ENCODE measurements at regions of chr16 and their contacts with region 1.

Region 1: DNA sequence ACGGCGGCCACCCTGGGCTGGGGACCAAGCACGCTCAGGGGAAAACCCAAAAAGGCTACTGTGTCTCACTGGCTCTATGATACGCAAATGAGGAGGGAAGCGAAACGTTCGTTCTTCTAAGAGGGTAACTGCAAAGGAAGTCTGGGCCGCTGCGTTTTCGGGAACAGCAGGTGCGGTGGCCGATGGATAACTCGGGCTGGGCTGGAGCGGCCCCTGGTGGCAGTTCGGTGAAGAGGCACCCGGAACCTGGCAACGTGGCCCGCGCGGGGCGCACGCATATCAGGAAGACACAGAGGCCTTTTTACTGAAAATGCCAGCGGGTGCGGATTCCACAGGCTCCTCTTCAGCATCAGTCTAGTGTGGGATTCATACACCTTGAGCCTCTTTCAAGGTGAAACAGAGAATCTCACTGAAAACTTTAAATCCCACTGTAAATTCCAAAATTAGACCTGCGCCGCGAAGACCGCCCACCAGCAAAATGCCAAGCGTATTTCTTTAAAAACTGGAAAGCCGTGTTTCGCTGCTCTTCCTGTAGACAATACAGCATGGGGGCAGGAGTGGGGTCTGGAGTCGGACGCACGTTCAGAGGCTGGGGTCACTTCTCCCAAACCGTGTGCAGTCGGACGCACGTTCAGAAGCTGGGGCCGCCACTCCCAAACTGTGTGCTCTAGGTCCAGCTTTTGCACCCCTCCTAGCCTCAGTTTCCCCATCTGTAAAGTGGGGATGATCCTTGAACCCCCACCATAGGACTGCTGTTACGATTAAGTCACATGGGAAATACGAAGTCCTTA is 44.4 kb upstream of the METTL9 start:
- DNase-seq: peak; percentile 86 to 99 (median 94)

Region 2: DNA sequence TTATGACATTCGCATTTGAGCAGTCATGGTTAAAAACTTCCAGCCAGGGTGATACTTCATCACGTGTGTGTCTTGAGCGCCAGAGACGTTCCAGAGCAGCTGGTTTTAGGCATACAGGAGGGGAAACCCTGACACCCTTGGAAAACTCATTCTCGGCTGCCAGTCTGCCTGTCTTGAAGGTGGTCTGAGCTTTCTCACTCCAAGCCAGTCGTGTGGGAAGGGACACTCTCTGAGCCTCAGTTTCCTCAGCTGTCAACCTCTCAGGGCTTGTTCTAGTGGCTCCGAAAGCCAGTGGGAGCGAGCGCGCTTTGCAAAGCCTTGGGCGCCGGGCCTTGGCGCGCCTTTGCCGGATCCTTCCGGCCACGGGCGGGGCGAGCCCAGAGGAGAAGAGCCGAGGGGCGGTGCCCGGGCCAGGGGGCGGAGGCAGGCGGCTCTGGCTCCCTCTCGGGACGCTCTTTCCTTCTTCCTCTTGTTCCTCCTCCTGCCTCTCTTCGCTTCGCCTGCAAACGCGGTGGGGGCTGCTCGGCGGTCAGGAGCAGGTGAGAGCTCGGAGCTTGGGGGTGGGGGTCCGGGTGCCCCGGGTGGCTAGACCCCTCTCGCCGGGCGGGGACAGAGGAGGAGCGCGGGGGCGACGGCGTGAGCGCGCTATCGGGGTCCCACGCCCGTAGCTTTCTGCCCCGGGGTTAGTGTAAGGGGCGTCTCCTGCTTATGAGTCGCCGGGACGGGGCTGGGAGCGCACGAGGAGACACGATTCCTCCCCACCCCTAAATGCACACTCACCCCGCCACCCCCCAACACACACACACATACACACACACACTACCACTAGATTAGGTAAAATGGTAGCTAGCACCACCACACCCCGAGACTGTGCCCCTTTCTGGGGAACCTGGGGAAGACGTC is 396.5 kb before region 1 on chr16 and contains the start of gene LDAF1:
- intact Hi-C with region 1: loop called (anchors 10 kb)
- DNase-seq: peak; percentile 22 to 92 (median 46)

Region 3: GRCh38 chr16:21184834-21185233 is 370.2 kb before region 1 on chr16:
- intact Hi-C with region 1: loop called (anchors 10 kb)
- DNase-seq: no peak

Region 4: DNA sequence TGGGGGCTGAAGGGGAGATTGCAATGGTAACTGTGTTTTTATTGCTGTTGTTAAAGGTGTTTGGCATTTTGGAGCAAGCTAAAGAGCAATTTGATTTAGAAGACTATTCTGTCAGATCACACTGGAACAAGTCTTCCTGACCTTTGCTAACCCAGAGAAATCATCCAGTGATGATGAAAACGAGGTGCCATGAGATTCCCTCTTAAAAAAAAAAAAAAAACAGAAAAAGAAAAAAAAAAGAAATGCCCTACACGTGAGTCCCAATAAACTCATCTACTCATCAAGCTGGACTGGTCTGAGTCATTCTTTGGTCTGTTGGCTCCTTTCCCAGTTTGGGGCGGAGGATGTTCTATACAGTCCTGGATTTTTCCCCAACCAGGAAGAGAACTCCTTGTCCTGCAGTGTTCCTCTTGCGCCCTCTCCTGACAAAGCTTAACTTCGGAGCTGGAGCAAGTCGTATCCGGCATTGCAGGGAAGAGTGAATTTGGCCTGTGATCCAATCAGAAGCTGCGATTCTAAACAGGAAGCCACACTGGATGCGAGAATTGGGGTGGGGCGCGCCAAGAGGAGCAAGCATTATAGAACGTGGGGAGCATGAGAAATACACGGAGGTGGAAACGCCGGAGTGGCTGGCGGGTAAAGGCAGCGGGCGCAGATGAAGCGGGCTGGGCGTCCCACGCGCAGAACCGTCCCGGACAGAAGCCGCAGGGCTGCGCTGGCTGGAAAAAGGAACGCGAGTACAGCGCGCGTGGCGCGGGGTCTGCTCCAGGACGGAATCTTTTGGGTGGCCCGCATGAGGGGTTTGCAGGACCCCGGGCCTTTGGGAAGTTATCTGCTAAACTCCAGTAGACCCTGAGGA is 254.5 kb before region 1 on chr16:
- intact Hi-C with region 1: loop called (anchors 10 kb)
- DNase-seq: peak; percentile 72 to 96 (median 87)

Region 5: DNA sequence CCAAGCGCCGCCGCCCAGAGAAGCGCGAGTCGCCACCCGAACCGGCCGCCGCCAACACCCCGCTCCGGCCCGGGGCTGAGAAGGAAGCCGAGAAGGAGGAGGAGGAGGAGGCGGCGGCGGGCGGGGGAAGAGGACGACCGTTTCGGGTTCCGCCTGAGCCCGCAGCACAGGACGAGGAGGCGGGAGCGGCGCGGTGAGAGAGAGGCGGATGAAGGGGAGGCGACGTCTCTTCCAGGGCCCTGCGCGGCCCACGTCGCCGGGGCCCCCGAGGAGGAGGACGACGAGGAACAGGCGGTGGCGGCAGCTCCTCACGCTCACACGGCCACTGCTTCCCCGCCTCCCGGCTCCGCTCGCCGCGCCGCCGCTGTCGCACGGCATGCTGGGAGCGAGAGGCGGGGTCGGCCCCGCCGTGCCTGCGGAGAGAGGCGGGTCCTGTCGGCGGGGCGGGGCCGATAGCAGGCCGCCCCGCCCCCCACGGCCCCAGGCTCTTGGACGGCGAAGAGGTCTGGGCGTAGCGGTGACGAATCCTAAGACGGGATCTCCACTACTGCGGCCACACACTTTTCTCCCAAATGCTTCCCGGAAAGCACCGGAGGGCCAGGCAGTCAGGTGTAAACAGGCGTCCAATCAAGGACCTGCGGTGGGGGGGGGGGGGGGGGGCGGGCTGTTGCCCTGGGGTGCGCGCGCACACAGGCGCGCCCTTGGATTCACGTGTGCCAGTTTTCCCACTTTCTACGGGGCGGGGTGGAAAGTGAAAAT is 52.9 kb before region 1 on chr16:
- intact Hi-C with region 1: loop called (anchors 10 kb)
- DNase-seq: peak; percentile 86 to 99 (median 96)

Region 6: DNA sequence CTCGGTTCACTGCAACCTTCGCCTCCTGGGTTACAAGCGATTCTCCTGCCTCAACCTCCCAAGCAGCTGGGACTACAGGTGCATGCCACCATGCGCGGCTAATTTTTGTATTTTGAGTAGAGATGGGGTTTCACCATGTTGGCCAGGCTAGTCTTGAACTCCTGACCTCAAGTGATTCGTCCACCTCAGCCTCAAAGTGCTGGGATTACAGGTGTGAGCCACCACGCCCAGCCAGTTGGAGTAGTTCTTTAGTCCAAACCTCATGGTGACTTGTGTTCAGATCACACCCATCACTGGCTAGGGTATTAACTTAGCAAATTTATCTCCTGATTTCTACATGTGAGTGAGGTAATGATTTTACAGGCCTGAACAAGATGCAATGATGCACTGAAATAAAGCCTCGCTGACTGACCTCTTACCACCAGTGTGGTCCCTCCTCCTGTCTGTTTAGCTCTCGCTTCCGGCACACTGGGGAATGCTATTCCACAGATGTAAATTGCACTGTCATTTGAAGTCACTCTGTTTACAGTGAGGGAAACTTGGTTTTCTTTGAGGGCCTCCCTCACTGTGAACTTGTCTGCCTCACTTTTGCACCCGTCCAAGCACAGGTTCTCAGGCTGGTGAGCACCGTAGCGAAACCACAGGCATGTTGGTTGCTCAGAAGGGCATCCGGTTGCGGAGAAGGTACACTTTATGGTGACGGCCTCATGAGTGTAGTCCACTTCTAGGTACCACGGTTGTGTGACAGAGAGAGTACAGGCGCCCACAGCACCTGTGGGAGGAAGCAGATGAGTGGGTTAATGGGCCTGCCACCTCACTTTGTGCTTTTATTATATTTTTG is 92.0 kb after region 1 on chr16:
- intact Hi-C with region 1: no loop called
- DNase-seq: peak in 1 of 10 donors; percentile 67